Activated naive CD4-positive, alpha-beta T cell treated with anti-CD3 and anti-CD28 coated beads for 36 hours (primary cell): ENCODE measurements at regions of chr12 and their contacts with region 1.

Region 1: GRCh38 chr12:51868821-51869502 is 18.9 kb upstream of the ANKRD33 start:
- DNase-seq: no peak
- H3K4me3 Mint-ChIP-seq: no peak overlapping the region
- H3K27ac Mint-ChIP-seq: no peak overlapping the region
- H3K4me1 Mint-ChIP-seq: peaks cover 19% of the 10 kb centered on the region
- H3K27me3 Mint-ChIP-seq: peaks cover 48% of the 10 kb centered on the region

Region 2: GRCh38 chr12:51590347-51591019 is 278.5 kb before region 1 on chr12:
- CTCF ChIA-PET with region 1: no interaction called
- intact Hi-C with region 1: loop called (anchors 5 kb)
- DNase-seq: peak; percentile 76
- H3K4me3 Mint-ChIP-seq: peak overlapping the region; percentile 80
- H3K27ac Mint-ChIP-seq: no peak overlapping the region
- H3K4me1 Mint-ChIP-seq: peaks cover 12% of the 10 kb centered on the region
- H3K27me3 Mint-ChIP-seq: peaks cover 47% of the 10 kb centered on the region

Region 3: DNA sequence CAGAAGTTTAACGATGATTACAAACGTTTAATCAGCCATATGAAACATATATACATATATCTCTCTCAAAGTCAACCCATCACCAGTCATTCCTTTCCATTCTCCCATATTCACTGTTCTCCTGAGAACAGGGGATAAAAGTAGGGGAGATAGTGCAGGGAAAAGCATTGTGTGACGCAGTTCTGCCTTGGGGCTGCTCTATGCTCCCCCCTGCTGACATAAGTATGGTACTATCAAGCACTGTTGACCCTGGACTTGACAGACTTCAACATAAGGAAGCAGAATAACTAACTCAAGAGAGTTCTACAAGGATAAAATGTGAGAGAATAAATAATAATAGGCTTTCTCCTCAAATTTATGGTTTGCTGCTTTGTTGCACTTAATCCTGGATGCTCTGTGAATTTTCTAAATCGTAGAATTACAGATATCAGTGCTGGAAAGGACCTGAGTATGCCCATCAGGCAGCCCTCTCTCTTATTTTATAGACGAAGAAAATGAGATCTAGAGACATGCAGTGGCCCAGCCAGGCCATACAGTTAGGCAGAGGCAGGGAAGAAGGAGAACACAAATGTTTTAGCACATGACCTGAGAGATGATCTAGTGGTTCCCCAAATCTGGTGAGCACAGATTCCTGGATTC is 190.8 kb before region 1 on chr12:
- CTCF ChIA-PET with region 1: no interaction called
- intact Hi-C with region 1: loop called (anchors 10 kb)
- DNase-seq: peak; percentile 30
- H3K4me3 Mint-ChIP-seq: no peak overlapping the region
- H3K27ac Mint-ChIP-seq: no peak overlapping the region
- H3K4me1 Mint-ChIP-seq: no peaks in the 10 kb centered on the region
- H3K27me3 Mint-ChIP-seq: no peaks in the 10 kb centered on the region